AG04449 (cell line): ENCODE measurements at regions of chr5 and their contacts with region 1.

Region 1: GRCh38 chr5:147857302-147858129 is 21.0 kb upstream of the SCGB3A2 start:
- DNase-seq: peak; percentile 7
- H3K4me3 ChIP-seq: no peak overlapping the region
- CTCF ChIP-seq: peak; percentile 68

Region 2: GRCh38 chr5:147845618-147846017 is 11.9 kb before region 1 on chr5:
- CTCF ChIA-PET with region 1: interaction called, 22 read pairs
- POLR2A ChIA-PET with region 1: no interaction called
- DNase-seq: no peak
- H3K4me3 ChIP-seq: no peak overlapping the region
- CTCF ChIP-seq: no peak